ENCODE measurements at regions of chr14 and their contacts with region 1.

Region 1: GRCh38 chr14:99899578-99900178 is 106.5 kb downstream of the EML1 start:
- DNase-seq: no peak
- H3K4me3 ChIP-seq: no peak overlapping the region
- H3K27ac ChIP-seq: no peak overlapping the region
- H3K4me1 ChIP-seq: no peaks in the 10 kb centered on the region
- H3K27me3 ChIP-seq: no peaks in the 10 kb centered on the region
- CTCF ChIP-seq: peak; percentile 48 to 68 (median 59)
- EP300 ChIP-seq: no peak
- POLR2A ChIP-seq: no peak

Region 2: GRCh38 chr14:99683619-99684355 is 215.9 kb before region 1 on chr14 and contains the start of gene CYP46A1:
- in situ Hi-C with region 1: no loop called
- intact Hi-C with region 1: loop called (anchors 5 kb)
- DNase-seq: peak; percentile 100
- H3K4me3 ChIP-seq: peak within 1 kb of the TSS; percentile 62 to 93 (median 70)
- H3K27ac ChIP-seq: peak within 1 kb of the TSS; percentile 82 to 92 (median 88)
- H3K4me1 ChIP-seq: peaks cover 12 to 16% (median 15%) of the 10 kb centered on the region in 4 donors
- H3K27me3 ChIP-seq: peaks cover 29% of the 10 kb centered on the region
- CTCF ChIP-seq: no peak
- EP300 ChIP-seq: no peak
- POLR2A ChIP-seq: no peak
- total RNA-seq, gene CYP46A1: 0.27 to 0.75 (median 0.52) TPM

Region 3: GRCh38 chr14:100096570-100096971 is 196.9 kb after region 1 on chr14:
- in situ Hi-C with region 1: no loop called
- intact Hi-C with region 1: no loop called
- DNase-seq: no peak
- H3K4me3 ChIP-seq: no peak overlapping the region
- H3K27ac ChIP-seq: no peak overlapping the region
- H3K4me1 ChIP-seq: no peaks in the 10 kb centered on the region
- H3K27me3 ChIP-seq: no peaks in the 10 kb centered on the region
- CTCF ChIP-seq: no peak
- EP300 ChIP-seq: no peak
- POLR2A ChIP-seq: no peak

Measured in transverse colon (tissue), 4 donors.